ENCODE measurements at regions of chr3 and their contacts with region 1.

Region 1: GRCh38 chr3:47522082-47522987 is 8.8 kb upstream of the ELP6 start:
- DNase-seq: peak; percentile 47
- H3K4me3 ChIP-seq: no peak overlapping the region
- CTCF ChIP-seq: peak; percentile 82

Region 2: GRCh38 chr3:47536221-47536891 is 14.0 kb after region 1 on chr3:
- CTCF ChIA-PET with region 1: interaction called, 85 read pairs
- POLR2A ChIA-PET with region 1: no interaction called
- DNase-seq: no peak
- H3K4me3 ChIP-seq: no peak overlapping the region
- CTCF ChIP-seq: no peak

Region 3: GRCh38 chr3:47542471-47543173 is 20.3 kb after region 1 on chr3:
- CTCF ChIA-PET with region 1: interaction called, 85 read pairs
- POLR2A ChIA-PET with region 1: no interaction called
- DNase-seq: no peak
- H3K4me3 ChIP-seq: no peak overlapping the region
- CTCF ChIP-seq: no peak

Region 4: DNA sequence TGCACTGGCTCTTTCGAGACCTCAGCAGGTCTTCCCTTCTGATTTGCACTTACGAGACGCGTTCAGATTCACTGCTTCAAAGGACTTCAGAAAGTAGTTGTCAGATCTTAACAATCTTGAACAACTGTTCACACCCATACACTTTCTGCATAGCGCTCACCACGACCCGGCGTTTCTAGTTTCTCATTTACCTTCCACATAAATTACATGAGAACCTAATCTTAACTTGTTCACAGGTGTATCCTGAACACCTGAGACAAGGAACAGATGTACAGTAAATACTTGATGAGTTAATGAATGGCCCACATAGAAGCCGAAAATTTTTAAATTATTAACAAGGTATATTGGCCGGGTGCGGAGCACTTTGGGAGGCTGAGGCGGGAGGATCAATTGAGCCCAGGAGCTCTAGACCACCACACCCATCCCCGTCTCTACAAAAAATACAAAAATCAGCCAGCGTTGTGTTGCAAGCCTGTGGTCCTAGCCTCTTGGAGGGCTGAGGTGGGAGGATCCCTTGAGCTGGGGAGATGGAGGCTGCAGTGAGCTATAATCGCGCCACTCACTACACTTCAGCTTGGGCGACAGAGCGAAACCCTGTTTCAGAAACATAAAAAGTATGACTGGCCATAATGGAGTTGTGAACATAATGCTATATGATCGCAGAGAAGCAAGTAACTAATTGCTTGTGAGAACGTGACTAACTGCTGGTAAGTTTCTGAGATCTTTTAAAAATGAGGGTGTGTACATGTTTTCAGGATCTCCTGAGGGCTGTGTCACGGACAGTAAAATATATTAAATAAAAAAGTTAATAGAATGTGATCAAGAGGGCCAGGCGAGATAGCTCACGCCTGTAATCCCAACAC is 260.3 kb after region 1 on chr3:
- CTCF ChIA-PET with region 1: interaction called, 196 read pairs
- POLR2A ChIA-PET with region 1: interaction called, 5 read pairs
- DNase-seq: no peak
- H3K4me3 ChIP-seq: peak overlapping the region; percentile 72
- CTCF ChIP-seq: no peak

Region 5: DNA sequence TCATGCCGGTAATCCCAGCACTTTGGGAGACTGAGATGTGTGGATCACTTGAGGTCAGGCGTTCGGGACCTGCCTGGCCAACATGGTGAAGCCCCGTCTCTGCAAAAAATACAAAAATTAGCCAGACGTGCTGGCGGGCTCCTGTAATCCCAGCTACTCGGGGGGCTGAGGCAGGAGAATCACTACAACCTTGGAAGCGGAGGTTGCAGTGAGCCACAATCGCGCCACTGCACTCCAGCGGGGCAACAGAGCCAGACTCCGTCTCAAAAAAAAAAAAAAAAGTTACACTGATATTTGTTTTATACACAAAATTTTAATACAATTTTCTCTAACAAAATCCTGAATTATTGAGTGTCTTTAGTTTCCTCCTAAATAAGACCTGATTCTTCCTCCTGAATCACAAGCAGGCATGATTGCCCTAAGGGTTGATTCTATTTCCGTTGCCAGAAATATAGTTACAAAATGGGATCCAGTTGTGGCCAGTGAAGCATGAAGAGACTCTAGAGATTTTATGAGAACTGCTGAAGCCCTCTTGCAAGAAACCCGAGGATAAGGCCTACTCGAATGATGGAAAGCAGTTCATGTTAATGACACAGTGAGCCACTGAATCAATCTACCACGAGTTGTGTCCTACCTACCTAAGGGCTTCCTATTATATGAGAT is 269.0 kb after region 1 on chr3:
- CTCF ChIA-PET with region 1: interaction called, 196 read pairs
- POLR2A ChIA-PET with region 1: interaction called, 5 read pairs
- DNase-seq: no peak
- H3K4me3 ChIP-seq: no peak overlapping the region
- CTCF ChIP-seq: no peak

Region 6: DNA sequence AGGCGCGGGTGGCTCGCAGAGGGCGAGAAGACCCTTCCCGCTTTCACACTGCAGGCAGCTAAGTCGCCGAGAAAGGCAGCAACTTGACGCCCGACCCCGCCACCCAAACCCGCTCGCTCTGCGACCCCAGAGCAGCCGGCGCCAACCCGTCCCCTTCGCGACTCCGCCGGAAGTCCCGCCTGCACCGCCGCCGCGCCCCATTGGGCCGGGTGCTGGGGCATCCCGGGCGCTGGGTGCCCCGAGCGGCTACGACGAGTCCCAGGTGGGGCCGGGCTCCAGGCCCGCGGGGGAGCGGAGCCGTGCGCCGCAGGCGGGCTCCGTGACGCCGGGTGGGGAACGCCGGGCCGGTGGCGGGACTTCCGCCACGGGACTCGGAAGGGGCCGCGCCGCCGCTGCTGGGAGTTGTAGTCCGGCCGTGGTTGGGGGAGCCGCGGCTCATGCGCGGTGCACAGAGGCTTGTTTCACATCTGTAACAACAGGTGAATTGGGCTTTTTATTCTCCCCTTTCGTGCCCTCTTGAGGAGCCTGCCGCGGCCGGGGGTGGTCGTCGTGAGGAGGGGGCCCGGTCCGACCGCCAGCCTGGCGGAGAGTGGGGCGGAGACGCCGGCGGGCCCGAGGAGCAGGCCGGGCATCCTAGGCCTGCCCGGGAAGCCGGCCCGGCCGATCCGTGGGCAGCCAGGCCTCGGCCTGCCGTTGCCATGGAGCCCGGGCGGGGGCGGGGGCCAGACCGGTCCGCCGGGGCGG is 280.6 kb after region 1 on chr3 and contains the start of gene DHX30:
- CTCF ChIA-PET with region 1: interaction called, 24 read pairs
- POLR2A ChIA-PET with region 1: no interaction called
- DNase-seq: no peak
- H3K4me3 ChIP-seq: peak within 1 kb of the TSS; percentile 86
- CTCF ChIP-seq: no peak

Measured in AG04449 (cell line).